IMR-90 (cell line): ENCODE measurements at regions of chr9 and their contacts with region 1.

Region 1: DNA sequence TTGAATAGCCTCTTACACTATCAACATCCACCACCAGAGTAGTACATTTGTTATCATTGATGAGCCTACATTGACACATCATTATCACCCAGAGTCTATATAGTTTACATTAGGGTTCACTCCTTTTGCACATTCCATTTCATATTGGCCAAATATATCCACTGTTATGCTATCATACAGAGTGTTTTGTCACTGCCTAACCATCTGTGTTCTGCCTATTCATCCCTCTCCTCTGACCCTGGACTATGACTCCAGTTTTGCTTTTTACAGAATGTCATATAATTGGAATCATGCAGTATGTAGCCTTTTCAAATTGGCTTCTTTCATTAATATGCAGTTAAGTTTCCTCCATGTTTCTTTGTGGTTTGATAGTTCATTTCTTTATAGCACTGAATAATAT is 904.7 kb downstream of the TLE1 start:
- DNase-seq: peak; percentile 27
- ATAC-seq: peak; percentile 67; the same call in 1 of the 2 replicates
- H3K4me3 ChIP-seq: no peak overlapping the region
- H3K27ac ChIP-seq: no peak overlapping the region
- H3K4me1 ChIP-seq: no peaks in the 10 kb centered on the region
- H3K27me3 ChIP-seq: no peaks in the 10 kb centered on the region
- CTCF ChIP-seq: no peak
- POLR2A ChIP-seq: no peak
- RAD21 ChIP-seq: no peak

Region 2: GRCh38 chr9:80763536-80763935 is 21.1 kb before region 1 on chr9:
- CTCF ChIA-PET with region 1: no interaction called
- POLR2A ChIA-PET with region 1: no interaction called
- dilution Hi-C with region 1: no loop called
- in situ Hi-C with region 1: no loop called
- intact Hi-C with region 1: loop called (anchors 1 kb)
- DNase-seq: no peak
- ATAC-seq: no peak
- H3K4me3 ChIP-seq: no peak overlapping the region
- H3K27ac ChIP-seq: no peak overlapping the region
- H3K4me1 ChIP-seq: no peaks in the 10 kb centered on the region
- H3K27me3 ChIP-seq: no peaks in the 10 kb centered on the region
- CTCF ChIP-seq: no peak
- POLR2A ChIP-seq: no peak
- RAD21 ChIP-seq: no peak

Region 3: DNA sequence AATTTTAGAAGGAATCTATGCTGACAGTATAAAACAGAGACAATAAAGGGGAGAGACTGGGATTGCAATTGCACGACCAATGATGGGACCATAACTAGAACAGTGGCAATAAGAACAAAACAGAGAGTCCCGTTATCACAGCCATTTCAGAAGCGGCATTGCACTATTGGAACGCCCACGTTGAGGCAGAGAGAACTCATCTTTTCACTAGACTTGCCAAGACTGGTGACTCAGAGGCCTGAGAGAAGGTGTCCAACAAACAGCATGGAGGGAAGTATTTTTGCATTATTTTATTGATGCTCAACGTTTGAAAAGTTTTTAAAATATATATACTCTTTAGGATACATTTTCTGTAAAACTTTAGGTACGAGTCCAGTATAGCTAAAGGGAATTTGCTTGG is 167.0 kb after region 1 on chr9:
- CTCF ChIA-PET with region 1: no interaction called
- POLR2A ChIA-PET with region 1: no interaction called
- dilution Hi-C with region 1: no loop called
- in situ Hi-C with region 1: no loop called
- intact Hi-C with region 1: no loop called
- DNase-seq: peak; percentile 38
- ATAC-seq: no peak
- H3K4me3 ChIP-seq: no peak overlapping the region
- H3K27ac ChIP-seq: no peak overlapping the region
- H3K4me1 ChIP-seq: no peaks in the 10 kb centered on the region
- H3K27me3 ChIP-seq: no peaks in the 10 kb centered on the region
- CTCF ChIP-seq: no peak
- POLR2A ChIP-seq: no peak
- RAD21 ChIP-seq: no peak

Region 4: DNA sequence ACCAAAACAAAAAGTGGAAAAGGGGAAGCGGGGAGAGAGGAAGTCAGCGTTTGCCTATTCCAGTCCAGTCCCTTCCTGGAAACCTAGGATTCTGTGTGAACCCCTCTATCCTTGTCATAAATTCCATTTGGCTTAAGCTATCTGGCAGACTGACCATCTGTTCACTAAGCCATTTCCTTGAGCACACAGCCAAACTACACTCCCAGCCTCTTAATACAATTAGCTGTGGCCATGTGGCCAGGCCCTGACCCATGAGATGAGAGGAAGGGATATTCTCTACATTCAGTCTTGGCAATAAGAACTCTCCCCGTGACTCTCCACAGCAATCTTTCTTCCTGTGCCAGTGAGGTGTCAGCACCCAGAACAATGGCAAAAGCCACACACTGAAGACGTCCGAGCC is 479.9 kb after region 1 on chr9:
- CTCF ChIA-PET with region 1: no interaction called
- POLR2A ChIA-PET with region 1: no interaction called
- dilution Hi-C with region 1: no loop called
- in situ Hi-C with region 1: no loop called
- intact Hi-C with region 1: no loop called
- DNase-seq: peak; percentile 73
- ATAC-seq: peak; percentile 33; the same call in 1 of the 2 replicates
- H3K4me3 ChIP-seq: no peak overlapping the region
- H3K27ac ChIP-seq: no peak overlapping the region
- H3K4me1 ChIP-seq: peaks cover 3% of the 10 kb centered on the region
- H3K27me3 ChIP-seq: peaks cover 2% of the 10 kb centered on the region; the same call in 1 of the 2 replicates
- CTCF ChIP-seq: no peak
- POLR2A ChIP-seq: no peak
- RAD21 ChIP-seq: no peak